ENCODE measurements at regions of chr6 and their contacts with region 1.

Region 1: DNA sequence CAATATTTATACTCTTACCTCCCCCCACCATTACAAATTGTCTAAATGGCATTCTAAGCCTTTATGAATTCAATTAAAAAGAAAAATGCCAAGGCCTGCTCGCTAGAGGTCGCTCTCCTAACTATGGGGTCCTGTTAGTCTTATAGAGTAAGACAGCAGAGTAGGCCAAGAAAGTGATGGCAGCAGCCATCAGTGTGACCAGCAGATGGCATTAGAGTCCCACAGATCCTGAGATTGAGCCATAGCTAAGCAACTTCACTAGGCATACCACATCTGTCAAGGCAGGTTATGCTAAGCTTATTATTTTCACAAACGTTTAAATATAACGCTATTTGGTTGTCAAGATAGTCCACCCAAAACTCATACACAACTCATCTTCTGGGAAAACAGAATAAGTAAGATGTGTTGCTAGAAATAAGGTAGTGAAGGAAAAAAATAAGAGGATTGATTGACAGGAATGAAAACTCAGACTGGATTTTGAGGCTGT is 57.6 kb upstream of the SCAF8 start:
- DNase-seq: peak; percentile 98

Region 2: DNA sequence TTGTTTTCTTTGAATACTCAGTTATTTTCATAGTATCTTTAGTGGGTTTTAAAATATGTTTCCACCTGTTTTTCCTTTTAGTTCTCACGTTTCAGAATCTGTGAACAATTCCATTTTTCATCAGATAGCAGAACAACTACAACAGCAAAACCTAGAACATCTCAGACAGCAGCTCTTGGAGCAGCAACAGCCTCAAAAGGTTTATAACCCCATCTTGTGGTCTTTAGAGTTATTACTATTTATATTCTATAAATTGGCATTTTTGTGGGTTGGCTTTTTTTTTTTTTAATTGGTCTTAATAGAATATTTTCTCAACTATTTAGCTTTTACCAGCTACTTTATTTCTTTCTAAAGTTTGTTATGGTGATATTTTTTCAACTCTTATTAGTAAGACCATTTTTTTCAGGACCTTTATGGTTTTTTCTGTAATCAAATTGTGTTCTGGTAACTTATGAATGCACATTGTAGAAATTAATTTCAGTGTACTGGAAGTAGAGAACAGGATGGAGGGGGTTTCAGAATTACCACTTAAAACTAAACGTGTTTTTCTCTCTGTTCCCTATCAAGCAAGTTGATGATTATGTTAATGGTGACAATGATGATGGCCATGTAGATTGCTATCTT is 129.8 kb after region 1 on chr6:
- in situ Hi-C with region 1: loop called (anchors 25 kb)
- DNase-seq: peak; percentile 46

Region 3: GRCh38 chr6:155085582-155086257 is 410.1 kb after region 1 on chr6:
- in situ Hi-C with region 1: no loop called
- DNase-seq: no peak

Region 4: GRCh38 chr6:155174576-155175211 is 499.0 kb after region 1 on chr6:
- in situ Hi-C with region 1: loop called (anchors 25 kb)
- DNase-seq: peak; percentile 84